Ovary (tissue), 10 donors: ENCODE measurements at regions of chr6 and their contacts with region 1.

Region 1: GRCh38 chr6:152124429-152125074 is 317.1 kb downstream of the ESR1 start:
- DNase-seq: no peak
- H3K4me3 ChIP-seq: no peak overlapping the region
- H3K27ac ChIP-seq: no peak overlapping the region
- H3K4me1 ChIP-seq: peaks cover 8% of the 10 kb centered on the region
- H3K27me3 ChIP-seq: no peaks in the 10 kb centered on the region
- CTCF ChIP-seq: peak; percentile 53 to 86 (median 69)
- EP300 ChIP-seq: no peak
- POLR2A ChIP-seq: no peak

Region 2: DNA sequence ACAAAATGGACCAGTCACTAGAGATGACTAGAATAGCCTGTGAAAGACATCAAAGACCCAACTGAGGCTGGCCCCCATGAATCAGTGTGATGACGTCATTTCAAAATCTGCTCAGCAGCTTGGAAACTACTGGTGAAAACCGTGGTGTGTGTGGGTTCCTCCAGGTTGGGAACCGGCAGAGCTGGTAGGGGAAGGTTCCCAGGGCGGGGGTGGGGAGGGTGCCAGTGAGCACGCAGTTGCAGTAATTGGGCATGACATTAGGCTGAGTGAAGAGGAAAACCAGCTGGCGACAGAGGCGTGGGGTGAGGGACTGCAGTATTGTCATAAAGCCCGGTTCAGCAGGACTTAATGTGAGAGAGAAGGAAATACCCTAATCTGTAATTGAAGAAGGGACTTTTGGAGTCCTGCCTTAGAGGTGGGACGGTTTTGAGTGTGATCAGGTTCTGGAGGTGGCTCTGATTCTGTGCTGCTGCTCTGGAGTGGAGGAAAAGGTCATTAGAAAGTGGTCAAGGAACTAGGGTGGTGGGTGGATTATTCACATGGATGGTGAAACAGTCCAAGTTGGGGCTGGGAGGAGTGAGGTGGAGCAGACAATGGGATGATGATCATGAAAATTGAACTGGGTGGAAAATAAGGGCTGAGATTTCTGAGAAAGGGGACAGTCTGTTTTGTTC is 1311.1 kb before region 1 on chr6:
- intact Hi-C with region 1: no loop called
- DNase-seq: no peak
- H3K4me3 ChIP-seq: no peak overlapping the region
- H3K27ac ChIP-seq: no peak overlapping the region
- H3K4me1 ChIP-seq: no peaks in the 10 kb centered on the region
- H3K27me3 ChIP-seq: no peaks in the 10 kb centered on the region
- CTCF ChIP-seq: no peak
- EP300 ChIP-seq: no peak
- POLR2A ChIP-seq: no peak

Region 3: GRCh38 chr6:151765444-151765886 is 359.1 kb before region 1 on chr6:
- intact Hi-C with region 1: loop called in 3 of 4 experiments (anchors 5 to 10 kb)
- DNase-seq: peak in 3 of 5 donors; percentile 23 to 69 (median 48)
- H3K4me3 ChIP-seq: no peak overlapping the region
- H3K27ac ChIP-seq: no peak overlapping the region
- H3K4me1 ChIP-seq: peaks cover 1% of the 10 kb centered on the region
- H3K27me3 ChIP-seq: no peaks in the 10 kb centered on the region
- CTCF ChIP-seq: peak; percentile 71
- EP300 ChIP-seq: no peak
- POLR2A ChIP-seq: no peak

Region 4: GRCh38 chr6:152244998-152245630 is 120.6 kb after region 1 on chr6:
- intact Hi-C with region 1: no loop called
- DNase-seq: no peak
- H3K4me3 ChIP-seq: no peak overlapping the region
- H3K27ac ChIP-seq: peak overlapping the region; percentile 17 to 62
- H3K4me1 ChIP-seq: peaks cover 27% of the 10 kb centered on the region
- H3K27me3 ChIP-seq: no peaks in the 10 kb centered on the region
- CTCF ChIP-seq: no peak
- EP300 ChIP-seq: no peak
- POLR2A ChIP-seq: no peak